ENCODE measurements at regions of chr11 and their contacts with region 1.

Region 1: GRCh38 chr11:65117216-65118096 is at the start of gene ZNHIT2:
- DNase-seq: peak; percentile 98 to 100 (median 99)
- H3K4me3 ChIP-seq: peak within 1 kb of the TSS; percentile 49 to 100 (median 88)
- H3K27ac ChIP-seq: peak within 1 kb of the TSS; percentile 49 to 95 (median 89)
- H3K27me3 ChIP-seq: no peaks in the 10 kb centered on the region
- CTCF ChIP-seq: peak; percentile 92 to 100 (median 98)
- total RNA-seq, gene ZNHIT2: 4.6 to 13.3 (median 8.5) TPM

Region 2: DNA sequence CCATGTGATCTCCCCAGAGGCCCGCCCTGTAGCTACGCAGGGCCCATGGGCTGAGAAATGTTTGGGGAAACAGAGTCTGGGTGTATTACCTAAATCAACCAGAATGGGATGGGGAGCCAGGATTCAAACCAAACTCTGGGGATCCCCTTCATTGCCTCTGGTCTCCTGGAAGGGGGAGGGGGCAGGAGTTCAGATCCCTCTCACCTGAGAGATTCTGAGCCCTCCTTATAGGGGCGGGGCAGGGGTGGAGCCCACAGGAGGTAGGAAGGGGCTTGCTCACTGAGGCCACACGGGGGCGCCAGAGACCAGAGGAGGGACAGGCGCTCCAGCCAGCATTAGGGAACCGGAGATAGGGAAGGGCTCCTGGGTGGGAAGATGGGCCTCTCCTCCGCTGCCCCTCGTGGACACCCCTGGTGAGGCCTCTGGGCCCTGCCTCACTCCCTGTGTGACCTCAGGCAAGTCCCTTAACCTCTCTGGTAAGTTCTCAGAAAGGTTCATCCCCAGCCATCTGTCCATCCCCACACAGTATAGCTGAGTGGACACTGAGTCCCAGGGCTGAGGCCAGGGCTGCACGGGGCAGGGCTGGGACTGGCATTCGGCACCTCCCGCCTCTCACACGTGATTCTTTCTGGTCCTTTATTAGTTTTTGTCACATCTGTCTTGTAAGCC is 270.3 kb before region 1 on chr11:
- intact Hi-C with region 1: loop called in 1 of 2 experiments (anchors 5 kb)
- DNase-seq: peak; percentile 81 to 98 (median 88)
- H3K4me3 ChIP-seq: peak overlapping the region in 6 of 59 donors; percentile 2 to 21 (median 10)
- H3K27ac ChIP-seq: peak overlapping the region in 3 of 59 donors; percentile 39 to 92 (median 60)
- H3K27me3 ChIP-seq: peaks cover 0 to 15% (median 0%) of the 10 kb centered on the region in 45 donors
- CTCF ChIP-seq: peak; percentile 86 to 100 (median 98)

Region 3: DNA sequence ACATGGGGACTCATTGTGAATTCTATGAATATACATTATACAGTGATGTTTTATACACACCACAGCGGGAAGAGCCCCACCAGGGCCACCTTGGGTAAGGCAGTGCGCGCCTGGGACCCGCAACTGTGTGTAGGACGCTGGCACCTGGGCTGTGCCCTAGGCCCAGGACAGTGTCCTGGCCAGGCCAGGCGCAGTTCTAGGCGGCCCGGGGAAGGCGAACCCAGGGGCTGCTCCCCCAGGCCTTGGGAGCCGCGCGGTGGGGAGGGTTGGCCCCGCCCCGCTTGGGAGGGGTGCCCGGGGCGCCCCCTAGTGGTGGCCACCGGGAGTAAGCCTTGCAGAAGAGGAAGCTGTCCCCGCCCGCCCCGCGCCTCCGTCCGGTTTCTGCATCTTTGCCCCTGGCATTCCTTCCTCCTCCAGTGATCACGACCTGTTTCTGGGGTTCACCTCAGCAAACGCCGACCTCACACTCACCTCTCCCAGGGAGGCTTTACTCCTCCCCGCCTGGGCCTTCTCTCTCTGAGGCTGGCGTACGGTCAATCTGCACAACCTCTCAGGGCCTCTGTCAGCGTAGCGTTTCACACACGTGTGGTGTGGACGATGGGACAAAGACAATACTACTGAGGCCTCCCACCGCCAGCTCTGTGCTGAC is 229.6 kb before region 1 on chr11:
- intact Hi-C with region 1: loop called in 1 of 2 experiments (anchors 10 kb)
- DNase-seq: peak in 9 of 10 donors; percentile 60 to 88 (median 72)
- H3K4me3 ChIP-seq: peak overlapping the region in 55 of 59 donors; percentile 2 to 63 (median 37)
- H3K27ac ChIP-seq: peak overlapping the region in 28 of 59 donors; percentile 19 to 80 (median 60)
- H3K27me3 ChIP-seq: no peaks in the 10 kb centered on the region
- CTCF ChIP-seq: peak; percentile 75 to 99 (median 96)

Region 4: GRCh38 chr11:65083834-65084597 is 33.4 kb before region 1 on chr11 and contains the starts of genes CDCA5 and ZFPL1:
- intact Hi-C with region 1: loop called in 1 of 2 experiments (anchors 2 kb)
- DNase-seq: peak; percentile 95 to 99 (median 96)
- H3K4me3 ChIP-seq: peak within 1 kb of the TSS; percentile 54 to 100 (median 82)
- H3K27ac ChIP-seq: peak within 1 kb of the TSS; percentile 31 to 99 (median 88)
- H3K27me3 ChIP-seq: no peaks in the 10 kb centered on the region
- CTCF ChIP-seq: peak in 31 of 56 donors; percentile 5 to 60 (median 33)
- total RNA-seq, gene CDCA5: 1.3 to 8.1 (median 4.6) TPM
- total RNA-seq, gene ZFPL1: 27.8 to 62.4 (median 38.9) TPM

Region 5: GRCh38 chr11:65134386-65135253 is 17.2 kb after region 1 on chr11 and contains the start of gene SYVN1:
- intact Hi-C with region 1: loop called in 1 of 2 experiments (anchors 1 kb)
- DNase-seq: peak; percentile 86 to 97 (median 91)
- H3K4me3 ChIP-seq: peak within 1 kb of the TSS; percentile 62 to 100 (median 94)
- H3K27ac ChIP-seq: peak within 1 kb of the TSS; percentile 86 to 100 (median 98)
- H3K27me3 ChIP-seq: no peaks in the 10 kb centered on the region
- CTCF ChIP-seq: peak in 13 of 56 donors; percentile 3 to 42 (median 22)
- total RNA-seq, gene SYVN1: 38.3 to 74.2 (median 53.2) TPM

Region 6: GRCh38 chr11:65418711-65419459 is 301.4 kb after region 1 on chr11:
- intact Hi-C with region 1: no loop called
- DNase-seq: peak; percentile 81 to 94 (median 92)
- H3K4me3 ChIP-seq: peak overlapping the region; percentile 17 to 90 (median 76)
- H3K27ac ChIP-seq: peak overlapping the region; percentile 94 to 100 (median 100)
- H3K27me3 ChIP-seq: no peaks in the 10 kb centered on the region
- CTCF ChIP-seq: peak in 5 of 56 donors; percentile 4 to 15 (median 11)